PC-3 (cell line): ENCODE measurements at regions of chr19 and their contacts with region 1.

Region 1: DNA sequence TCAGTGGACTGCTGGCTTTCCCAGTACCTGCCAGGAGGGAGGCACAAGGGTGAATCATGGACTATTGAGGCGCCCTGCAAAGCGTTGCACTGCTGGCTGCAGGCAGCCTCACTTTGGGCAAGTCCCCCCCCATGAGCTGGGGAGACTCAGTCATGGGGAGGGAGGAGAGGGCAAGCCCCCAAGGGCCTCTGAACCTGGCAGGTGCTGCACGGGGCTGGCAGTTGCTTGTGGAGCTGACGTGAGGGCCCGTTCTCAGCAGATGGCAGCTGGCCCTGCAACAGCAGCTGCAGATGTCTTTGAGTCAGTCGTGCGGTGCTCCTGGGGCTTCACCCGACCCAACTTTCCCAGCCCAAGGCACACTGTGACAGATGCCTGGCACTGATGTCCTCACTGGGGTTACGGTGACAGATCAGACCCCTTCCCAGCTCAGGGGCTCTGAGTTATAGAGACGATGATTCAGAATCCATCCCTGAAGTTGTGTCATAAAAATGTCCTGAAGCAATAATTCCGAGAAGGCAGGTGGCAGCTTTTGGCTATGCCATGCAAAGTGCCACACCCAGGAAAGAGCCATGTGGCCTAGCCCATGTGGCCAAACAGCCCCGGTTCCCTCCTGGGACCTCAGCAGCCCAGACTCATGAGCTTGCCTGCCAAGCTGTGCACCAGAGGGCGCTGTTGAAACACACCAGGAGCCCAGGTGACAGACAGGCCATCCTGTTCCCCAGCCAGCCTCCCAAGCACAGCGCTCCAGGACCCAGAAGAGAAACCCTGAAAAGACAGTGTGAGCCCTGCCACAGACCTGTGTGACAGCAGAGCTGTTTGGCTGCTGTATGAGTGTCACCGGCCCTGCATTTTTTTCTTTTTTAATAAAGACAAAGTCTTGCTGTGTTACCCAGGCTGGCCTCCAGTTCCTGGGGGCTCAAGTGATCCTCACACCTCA is 53.6 kb upstream of the LDLR start:
- DNase-seq: peak; percentile 99
- ATAC-seq: peak; percentile 99
- H3K4me3 ChIP-seq: no peak overlapping the region
- H3K27ac ChIP-seq: peak overlapping the region; percentile 64
- H3K4me1 ChIP-seq: peaks cover 14% of the 10 kb centered on the region
- H3K27me3 ChIP-seq: no peaks in the 10 kb centered on the region
- CTCF ChIP-seq: peak; percentile 98

Region 2: GRCh38 chr19:11090054-11090900 is 54.6 kb after region 1 on chr19:
- CTCF ChIA-PET with region 1: interaction called, 5 read pairs
- POLR2A ChIA-PET with region 1: interaction called, 7 read pairs
- intact Hi-C with region 1: loop called (anchors 1 kb)
- DNase-seq: peak; percentile 98
- ATAC-seq: peak; percentile 72
- H3K4me3 ChIP-seq: peak overlapping the region; percentile 98
- H3K27ac ChIP-seq: peak overlapping the region; percentile 93
- H3K4me1 ChIP-seq: peaks cover 42% of the 10 kb centered on the region
- H3K27me3 ChIP-seq: no peaks in the 10 kb centered on the region
- CTCF ChIP-seq: 0 out of 2 replicates have a peak, but pooled peaks have one; percentile 23

Region 3: GRCh38 chr19:11125994-11126685 is 90.4 kb after region 1 on chr19:
- CTCF ChIA-PET with region 1: interaction called, 7 read pairs
- POLR2A ChIA-PET with region 1: no interaction called
- intact Hi-C with region 1: loop called (anchors 2 kb)
- DNase-seq: peak; percentile 87
- ATAC-seq: peak; percentile 74
- H3K4me3 ChIP-seq: no peak overlapping the region
- H3K27ac ChIP-seq: no peak overlapping the region
- H3K4me1 ChIP-seq: no peaks in the 10 kb centered on the region
- H3K27me3 ChIP-seq: no peaks in the 10 kb centered on the region
- CTCF ChIP-seq: peak; percentile 90

Region 4: GRCh38 chr19:11169896-11170678 is 134.4 kb after region 1 on chr19:
- CTCF ChIA-PET with region 1: no interaction called
- POLR2A ChIA-PET with region 1: no interaction called
- intact Hi-C with region 1: no loop called
- DNase-seq: no peak
- ATAC-seq: no peak
- H3K4me3 ChIP-seq: no peak overlapping the region
- H3K27ac ChIP-seq: no peak overlapping the region
- H3K4me1 ChIP-seq: peaks cover 18% of the 10 kb centered on the region
- H3K27me3 ChIP-seq: no peaks in the 10 kb centered on the region
- CTCF ChIP-seq: no peak

Region 5: GRCh38 chr19:11203194-11204075 is 167.7 kb after region 1 on chr19:
- CTCF ChIA-PET with region 1: no interaction called
- POLR2A ChIA-PET with region 1: no interaction called
- intact Hi-C with region 1: loop called (anchors 5 kb)
- DNase-seq: peak; percentile 79
- ATAC-seq: peak; percentile 82
- H3K4me3 ChIP-seq: no peak overlapping the region
- H3K27ac ChIP-seq: peak overlapping the region; percentile 15; the same call in 1 of the 2 replicates
- H3K4me1 ChIP-seq: peaks cover 11% of the 10 kb centered on the region
- H3K27me3 ChIP-seq: no peaks in the 10 kb centered on the region
- CTCF ChIP-seq: peak; percentile 90